Aorta (tissue), 5 donors: ENCODE measurements at regions of chr9 and their contacts with region 1.

Region 1: DNA sequence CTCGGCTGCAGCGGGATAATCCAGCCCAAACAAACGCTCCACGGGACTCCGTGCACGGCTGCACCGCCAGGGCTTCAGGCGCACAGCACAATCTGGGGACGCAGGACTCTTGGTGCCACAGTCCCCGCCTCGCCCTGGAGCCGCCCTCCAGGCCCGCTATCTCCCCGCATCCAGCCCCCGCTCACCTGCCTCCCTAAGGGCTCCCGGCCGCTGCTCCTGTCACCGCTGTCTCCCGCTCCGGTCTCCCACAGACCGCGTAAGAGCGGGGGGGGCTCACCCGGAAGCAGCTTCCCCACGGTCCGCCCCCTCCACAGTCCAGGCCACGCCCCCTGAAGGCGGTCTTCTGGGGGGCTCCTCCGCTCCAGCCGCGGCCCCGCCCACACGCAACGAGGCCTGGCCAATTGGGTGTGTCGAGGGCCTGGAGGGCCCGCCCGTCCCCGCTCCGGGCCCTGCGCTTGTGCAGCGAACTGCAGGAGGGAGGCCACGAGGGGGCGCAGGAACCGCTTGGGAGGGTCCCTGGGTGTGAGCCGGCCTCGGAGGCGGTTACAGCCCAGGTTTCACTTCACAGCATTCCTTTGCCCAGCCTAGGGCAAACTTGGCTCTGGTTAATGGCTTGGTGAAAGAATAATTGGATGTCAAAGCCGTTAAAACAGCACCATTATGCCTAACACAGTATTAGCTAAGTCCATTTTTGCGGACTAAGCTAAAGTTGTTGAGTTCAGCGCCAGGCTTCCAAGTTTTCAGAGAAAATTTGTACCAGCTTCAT is at the start of gene ALAD:
- DNase-seq: peak; percentile 100
- ATAC-seq: peak; percentile 100
- H3K4me3 ChIP-seq: peak within 1 kb of the TSS; percentile 35 to 68
- H3K27ac ChIP-seq: peak within 1 kb of the TSS; percentile 19 to 32
- H3K4me1 ChIP-seq: no peaks in the 10 kb centered on the region
- H3K27me3 ChIP-seq: no peaks in the 10 kb centered on the region
- total RNA-seq, gene ALAD: 26.3 to 40.8 TPM

Region 2: DNA sequence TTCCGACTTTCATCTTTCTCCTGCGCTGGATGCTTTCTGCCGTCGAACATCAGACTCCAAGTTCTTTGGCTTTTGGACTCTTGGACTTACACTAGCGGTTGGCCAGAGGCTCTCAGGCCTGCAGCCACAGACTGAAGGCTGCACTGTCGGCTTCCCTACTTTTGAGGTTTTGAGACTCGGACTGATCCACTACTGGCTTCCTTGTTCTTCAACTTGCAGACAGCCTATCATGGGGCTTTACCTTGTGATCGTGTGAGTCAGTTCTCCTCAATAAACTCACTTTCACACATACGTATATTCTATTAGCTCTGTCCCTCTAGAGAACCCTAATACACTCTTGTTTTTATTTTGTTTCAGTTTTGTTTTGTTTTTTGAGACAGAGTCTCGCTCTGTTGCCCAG is 190.4 kb before region 1 on chr9:
- intact Hi-C with region 1: no loop called
- DNase-seq: peak in 1 of 2 donors; percentile 58
- ATAC-seq: no peak
- H3K4me3 ChIP-seq: no peak overlapping the region
- H3K27ac ChIP-seq: no peak overlapping the region
- H3K4me1 ChIP-seq: no peaks in the 10 kb centered on the region
- H3K27me3 ChIP-seq: no peaks in the 10 kb centered on the region

Region 3: DNA sequence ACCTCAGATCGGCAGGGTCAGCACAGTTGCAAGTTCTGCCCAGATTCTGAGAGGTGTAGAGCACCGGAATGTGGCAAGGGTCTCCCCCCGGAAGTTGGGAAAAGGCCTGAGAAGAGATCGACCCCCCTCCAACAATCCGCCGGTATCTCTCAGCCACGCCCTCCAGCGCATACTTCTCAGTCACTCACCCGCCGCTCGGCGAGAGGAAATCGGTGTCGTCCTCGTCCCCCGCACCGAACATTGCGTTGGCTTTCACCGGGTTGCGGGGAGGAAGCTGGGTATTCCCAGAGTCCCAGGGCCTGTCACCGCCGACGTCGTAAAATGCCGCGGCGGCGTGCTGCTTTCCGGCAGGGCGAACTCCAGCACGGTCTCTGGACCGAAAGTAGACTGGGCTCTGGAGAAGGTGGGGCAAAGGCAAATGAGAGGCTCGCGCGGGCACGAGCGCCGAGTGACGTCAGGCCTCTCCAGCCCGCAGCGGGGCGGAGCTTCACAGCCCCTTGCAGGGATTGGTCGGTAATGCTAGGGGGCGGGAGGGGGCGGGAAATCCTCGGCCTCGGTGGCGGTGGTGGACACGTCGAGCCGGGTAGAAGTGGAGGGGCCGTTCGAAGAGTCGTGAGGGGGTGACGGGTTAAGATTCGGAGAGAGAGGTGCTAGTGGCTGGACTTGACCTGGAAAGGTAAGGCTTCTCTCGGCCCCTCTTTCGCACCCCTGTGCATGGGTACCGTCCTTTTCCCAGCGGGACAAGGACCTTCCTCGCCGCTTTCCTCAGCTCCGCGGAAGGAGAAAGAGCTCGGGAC is 180.0 kb before region 1 on chr9 and contains the starts of genes FKBP15 and SLC31A1:
- intact Hi-C with region 1: loop called in 1 of 2 experiments (anchors 2 kb)
- DNase-seq: peak; percentile 99
- ATAC-seq: peak; percentile 100
- H3K4me3 ChIP-seq: peak within 1 kb of the TSS; percentile 76 to 82
- H3K27ac ChIP-seq: peak within 1 kb of the TSS in 1 of 2 donors; percentile 55
- H3K4me1 ChIP-seq: peaks cover 0 to 13% of the 10 kb centered on the region in 2 donors
- H3K27me3 ChIP-seq: no peaks in the 10 kb centered on the region
- total RNA-seq, gene FKBP15: 26.4 to 48.3 TPM
- total RNA-seq, gene SLC31A1: 16.6 to 17.1 TPM

Region 4: GRCh38 chr9:113275157-113276131 is 125.8 kb before region 1 on chr9 and contains the starts of genes CDC26 and PRPF4:
- intact Hi-C with region 1: loop called (anchors 5 to 10 kb)
- DNase-seq: peak; percentile 98
- ATAC-seq: peak; percentile 98
- H3K4me3 ChIP-seq: peak within 1 kb of the TSS; percentile 64 to 97
- H3K27ac ChIP-seq: peak within 1 kb of the TSS; percentile 47 to 82
- H3K4me1 ChIP-seq: peaks cover 2 to 4% of the 10 kb centered on the region in 2 donors
- H3K27me3 ChIP-seq: no peaks in the 10 kb centered on the region
- total RNA-seq, gene CDC26: 23.1 to 23.8 TPM
- total RNA-seq, gene PRPF4: 12.8 to 12.9 TPM

Region 5: GRCh38 chr9:113317777-113318176 is 83.4 kb before region 1 on chr9:
- intact Hi-C with region 1: loop called in 1 of 2 experiments (anchors 5 kb)
- DNase-seq: no peak
- ATAC-seq: no peak
- H3K4me3 ChIP-seq: no peak overlapping the region
- H3K27ac ChIP-seq: no peak overlapping the region
- H3K4me1 ChIP-seq: peaks cover 0 to 2% of the 10 kb centered on the region in 2 donors
- H3K27me3 ChIP-seq: no peaks in the 10 kb centered on the region

Region 6: GRCh38 chr9:113591001-113591898 is 190.0 kb after region 1 on chr9:
- intact Hi-C with region 1: loop called in 1 of 2 experiments (anchors 5 kb)
- DNase-seq: peak; percentile 84 to 94
- ATAC-seq: peak; percentile 50
- H3K4me3 ChIP-seq: no peak overlapping the region
- H3K27ac ChIP-seq: peak overlapping the region; percentile 15 to 28
- H3K4me1 ChIP-seq: no peaks in the 10 kb centered on the region
- H3K27me3 ChIP-seq: no peaks in the 10 kb centered on the region

Region 7: DNA sequence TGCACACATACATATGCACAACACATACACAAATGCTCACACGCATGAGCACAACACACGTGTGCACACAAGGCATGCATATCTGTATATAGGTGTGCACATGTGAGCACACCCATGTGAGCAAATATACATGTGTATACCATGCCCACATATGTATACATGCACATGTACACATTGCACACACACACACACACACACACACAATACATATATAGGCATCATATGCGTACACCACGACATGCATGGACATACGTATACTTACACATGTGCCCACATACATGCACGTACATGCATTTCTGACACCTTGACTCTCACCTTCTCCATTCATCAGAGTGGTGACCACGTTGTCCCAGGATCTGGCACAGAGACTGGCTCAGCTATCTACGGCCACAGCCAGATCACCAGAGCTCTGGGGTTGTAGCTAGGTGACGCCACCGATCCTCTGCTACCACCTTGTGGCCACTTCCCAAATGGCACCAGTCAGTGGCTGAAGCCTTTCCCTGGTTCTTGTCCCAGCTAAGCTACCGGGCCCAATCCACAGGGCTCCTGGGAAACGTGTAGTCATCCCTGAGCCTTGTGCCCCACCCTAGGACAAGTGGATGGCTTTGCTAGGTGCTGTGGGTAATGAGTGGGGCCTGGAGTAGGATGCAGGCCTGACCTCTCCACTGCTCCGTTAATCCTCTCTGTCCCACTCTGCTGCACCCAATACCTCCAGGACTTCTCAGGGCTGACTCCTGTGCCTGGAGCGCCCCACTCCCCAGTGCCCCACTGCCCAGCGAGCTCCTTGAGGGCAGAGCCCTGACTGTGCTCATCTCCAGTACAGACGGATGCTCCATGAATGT is 256.7 kb after region 1 on chr9:
- intact Hi-C with region 1: loop called in 1 of 2 experiments (anchors 2 kb)
- DNase-seq: peak; percentile 91 to 94
- ATAC-seq: peak; percentile 84
- H3K4me3 ChIP-seq: no peak overlapping the region
- H3K27ac ChIP-seq: no peak overlapping the region
- H3K4me1 ChIP-seq: no peaks in the 10 kb centered on the region
- H3K27me3 ChIP-seq: no peaks in the 10 kb centered on the region